ENCODE measurements at regions of chr6 and their contacts with region 1.

Region 1: DNA sequence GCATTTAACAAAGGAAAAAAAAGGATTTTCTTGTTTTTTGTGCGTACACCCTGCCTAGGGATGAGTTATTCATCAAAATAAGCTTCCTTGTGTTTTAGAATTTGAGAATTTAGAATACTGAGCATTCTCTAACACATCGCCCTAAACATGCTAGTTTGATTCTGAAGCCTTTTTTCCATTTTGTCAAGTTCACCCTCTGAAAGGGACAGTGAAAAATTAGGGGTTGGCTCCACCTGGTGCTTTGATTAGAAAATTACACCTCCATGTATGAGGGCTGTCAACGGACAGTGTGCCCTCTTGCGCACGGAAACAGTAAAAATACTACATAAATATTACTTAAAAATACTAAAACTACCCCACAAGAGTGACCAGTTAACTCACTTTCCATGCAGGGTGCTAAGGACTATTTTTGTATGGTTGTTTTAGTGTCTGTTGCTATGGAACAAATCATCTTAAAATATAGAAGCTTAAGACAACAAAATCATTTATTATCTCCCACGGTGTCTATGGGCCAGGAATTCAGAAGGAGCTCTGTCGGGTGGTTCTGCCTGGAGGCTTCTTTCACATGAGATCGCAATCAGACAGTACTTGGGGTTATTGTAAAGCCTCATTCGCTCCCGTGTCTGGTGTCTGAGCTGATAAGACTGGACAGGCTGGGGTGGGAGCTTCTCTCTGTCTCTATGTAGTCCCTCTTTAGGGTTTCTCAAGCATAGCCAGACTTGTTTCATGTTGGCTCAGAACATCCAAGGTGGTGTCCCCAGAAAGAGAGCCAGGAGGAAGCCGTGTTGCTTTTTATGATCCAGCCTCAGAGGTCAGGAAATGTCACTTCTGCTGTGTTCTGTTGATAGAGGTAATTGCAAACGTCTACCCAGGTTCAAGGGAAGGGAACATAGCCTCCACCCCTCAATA is 41.1 kb upstream of the TMEM170B start:
- DNase-seq: peak; percentile 91
- ATAC-seq: peak; percentile 91
- H3K4me3 ChIP-seq: no peak overlapping the region
- H3K27ac ChIP-seq: peak overlapping the region; percentile 10
- H3K4me1 ChIP-seq: peaks cover 72% of the 10 kb centered on the region
- H3K27me3 ChIP-seq: no peaks in the 10 kb centered on the region
- CTCF ChIP-seq: peak; percentile 95
- EP300 ChIP-seq: peak in 1 of 2 experiments; percentile 34; a peak in 1 of 4 replicates
- POLR2A ChIP-seq: no peak
- RAD21 ChIP-seq: peak; percentile 98

Region 2: DNA sequence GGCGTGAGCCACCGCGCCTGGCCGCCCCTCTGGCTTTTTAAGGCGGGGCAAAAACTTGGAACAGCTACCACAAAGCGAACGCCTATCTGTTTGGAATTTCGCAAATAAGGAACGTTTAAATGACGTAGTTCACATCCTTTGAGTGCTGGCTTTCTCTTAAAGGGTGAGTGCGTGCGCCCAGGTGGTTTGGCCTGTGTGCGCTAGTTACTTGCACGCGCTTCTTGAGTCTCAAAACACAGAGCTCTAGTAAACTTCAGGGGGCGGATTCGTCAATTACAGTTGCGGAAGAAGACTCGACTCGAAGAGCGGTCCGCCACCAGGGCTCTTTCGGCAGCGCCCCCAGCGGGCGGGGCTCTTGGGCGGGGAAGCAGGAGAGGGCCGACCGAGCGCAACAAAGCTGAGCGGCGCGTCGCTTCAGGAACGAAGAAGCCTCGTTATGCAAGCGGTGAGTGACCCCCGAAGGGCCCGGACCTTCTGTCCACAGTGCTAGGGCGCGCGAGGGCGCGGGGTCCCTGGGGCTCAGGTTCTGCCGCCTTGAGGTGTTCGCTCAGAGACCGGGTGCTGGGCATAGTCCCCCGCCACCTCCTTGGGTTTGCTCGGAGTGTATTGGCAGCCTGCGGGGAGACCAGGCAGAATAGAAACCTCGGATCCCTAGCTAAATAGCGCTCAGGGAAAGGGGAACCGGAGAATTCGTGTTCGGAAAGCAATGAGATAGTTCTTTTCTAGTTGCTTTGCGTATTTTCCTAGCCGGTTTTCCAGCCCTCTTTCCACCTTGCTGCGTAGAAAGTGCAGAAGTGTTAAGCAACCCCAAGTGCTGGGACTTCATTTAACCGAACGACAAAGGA is 609.5 kb before region 1 on chr6 and contains the start of gene SYCP2L:
- CTCF ChIA-PET with region 1: no interaction called
- POLR2A ChIA-PET with region 1: no interaction called
- in situ Hi-C with region 1: no loop called
- intact Hi-C with region 1: no loop called
- DNase-seq: no peak
- ATAC-seq: no peak
- H3K4me3 ChIP-seq: no peak within 1 kb of the TSS
- H3K27ac ChIP-seq: no peak within 1 kb of the TSS
- H3K4me1 ChIP-seq: 0 out of 2 replicates have a peak, but pooled peaks cover 2% of the 10 kb centered on the region
- H3K27me3 ChIP-seq: peaks cover 0 to 22% of the 10 kb centered on the region in 2 experiments; a peak in 4 of 5 replicates
- CTCF ChIP-seq: no peak
- EP300 ChIP-seq: no peak
- POLR2A ChIP-seq: no peak
- RAD21 ChIP-seq: no peak
- total RNA-seq, gene SYCP2L: 0.22 TPM in 1 of 2 replicates, not detected in the other

Region 3: DNA sequence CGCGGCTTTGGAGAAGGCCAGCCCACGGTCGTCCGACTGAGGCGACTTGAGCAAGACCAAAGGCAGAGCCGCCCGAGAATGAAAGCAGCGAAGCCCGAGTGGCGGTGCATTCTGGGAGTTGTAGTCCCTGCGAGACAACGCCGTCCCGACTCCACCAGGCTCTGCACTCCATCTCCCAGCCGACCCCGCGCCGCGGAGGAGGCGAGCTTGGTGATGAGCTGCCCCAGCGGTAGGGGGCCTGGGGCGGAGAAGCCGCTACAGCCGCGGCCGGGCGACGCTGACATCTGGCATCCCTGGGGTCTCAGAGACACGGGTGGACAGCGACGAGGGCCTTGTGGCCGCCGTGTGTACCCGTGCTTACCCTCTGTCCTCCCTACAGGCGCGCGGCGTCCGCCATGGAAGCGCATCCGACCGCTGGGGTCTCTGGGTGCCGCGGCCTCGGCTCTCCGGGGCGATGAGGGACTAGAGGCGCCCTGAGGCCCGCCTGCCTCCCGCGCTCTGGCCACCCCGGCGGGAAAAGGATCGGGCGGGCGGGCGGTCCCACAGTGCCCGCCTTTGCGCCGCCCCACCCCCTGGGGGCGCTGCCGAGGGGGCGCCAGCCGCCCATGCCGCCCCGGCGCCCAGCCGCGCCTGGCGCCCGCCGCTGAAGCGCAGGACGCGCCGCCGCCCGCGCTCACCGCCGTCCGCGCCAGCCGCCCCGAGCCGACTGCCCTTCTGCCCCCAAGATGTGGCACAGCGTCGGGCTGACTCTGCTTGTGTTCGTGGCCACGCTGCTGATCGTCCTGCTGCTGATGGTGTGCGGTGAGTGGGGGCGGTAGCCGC is 402.6 kb before region 1 on chr6 and contains the start of gene SMIM13:
- CTCF ChIA-PET with region 1: interaction called, 4 read pairs
- POLR2A ChIA-PET with region 1: no interaction called
- in situ Hi-C with region 1: no loop called
- intact Hi-C with region 1: loop called (anchors 1 kb)
- DNase-seq: peak; percentile 98
- ATAC-seq: peak; percentile 97
- H3K4me3 ChIP-seq: peak within 1 kb of the TSS; percentile 93 to 99 (median 97)
- H3K27ac ChIP-seq: peak within 1 kb of the TSS; percentile 90
- H3K4me1 ChIP-seq: peaks cover 44% of the 10 kb centered on the region
- H3K27me3 ChIP-seq: no peaks in the 10 kb centered on the region; a peak in 1 of 5 replicates
- CTCF ChIP-seq: peak; percentile 67
- EP300 ChIP-seq: peak in 1 of 2 experiments; percentile 20; a peak in 2 of 4 replicates
- POLR2A ChIP-seq: peak; percentile 89 to 92
- RAD21 ChIP-seq: peak; percentile 79
- total RNA-seq, gene SMIM13: 9.5 and 10.2 TPM in 2 replicates

Region 4: GRCh38 chr6:11172501-11173332 is 323.7 kb before region 1 on chr6:
- CTCF ChIA-PET with region 1: interaction called, 65 read pairs
- POLR2A ChIA-PET with region 1: no interaction called
- in situ Hi-C with region 1: loop called (anchors 5 kb)
- intact Hi-C with region 1: loop called (anchors 1 kb)
- DNase-seq: peak; percentile 66
- ATAC-seq: peak; percentile 86
- H3K4me3 ChIP-seq: peak overlapping the region in 1 of 3 experiments; percentile 47; a peak in 2 of 6 replicates
- H3K27ac ChIP-seq: no peak overlapping the region
- H3K4me1 ChIP-seq: peaks cover 36% of the 10 kb centered on the region
- H3K27me3 ChIP-seq: no peaks in the 10 kb centered on the region
- CTCF ChIP-seq: peak; percentile 96
- EP300 ChIP-seq: no peak
- POLR2A ChIP-seq: no peak
- RAD21 ChIP-seq: peak; percentile 83

Region 5: DNA sequence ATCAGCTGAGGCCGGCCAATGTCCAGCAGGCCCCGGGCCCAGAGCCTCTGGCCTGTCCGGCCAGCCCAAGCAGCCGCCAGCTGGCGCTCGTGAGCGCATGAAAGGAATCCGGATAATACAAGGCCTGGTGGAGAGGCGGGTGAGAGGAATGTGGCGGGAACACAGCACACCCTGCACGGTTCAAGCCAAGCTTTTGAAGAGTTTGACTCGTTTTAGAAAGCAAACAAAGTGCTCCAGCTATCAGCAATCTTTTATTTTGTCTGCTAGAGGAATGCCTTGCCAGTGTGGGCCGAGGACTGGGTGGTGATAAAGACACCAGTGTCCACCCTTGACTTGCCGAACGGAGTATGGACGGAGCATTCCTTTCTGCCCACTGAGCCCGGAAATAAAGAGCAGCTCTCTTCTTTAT is 254.6 kb before region 1 on chr6:
- CTCF ChIA-PET with region 1: interaction called, 34 read pairs
- POLR2A ChIA-PET with region 1: no interaction called
- in situ Hi-C with region 1: no loop called
- intact Hi-C with region 1: loop called (anchors 1 kb)
- DNase-seq: peak; percentile 86
- ATAC-seq: peak; percentile 99
- H3K4me3 ChIP-seq: no peak overlapping the region
- H3K27ac ChIP-seq: no peak overlapping the region
- H3K4me1 ChIP-seq: peaks cover 32% of the 10 kb centered on the region
- H3K27me3 ChIP-seq: no peaks in the 10 kb centered on the region
- CTCF ChIP-seq: peak; percentile 87
- EP300 ChIP-seq: peak in 1 of 2 experiments; percentile 55; a peak in 1 of 4 replicates
- POLR2A ChIP-seq: no peak
- RAD21 ChIP-seq: peak; percentile 98

Region 6: DNA sequence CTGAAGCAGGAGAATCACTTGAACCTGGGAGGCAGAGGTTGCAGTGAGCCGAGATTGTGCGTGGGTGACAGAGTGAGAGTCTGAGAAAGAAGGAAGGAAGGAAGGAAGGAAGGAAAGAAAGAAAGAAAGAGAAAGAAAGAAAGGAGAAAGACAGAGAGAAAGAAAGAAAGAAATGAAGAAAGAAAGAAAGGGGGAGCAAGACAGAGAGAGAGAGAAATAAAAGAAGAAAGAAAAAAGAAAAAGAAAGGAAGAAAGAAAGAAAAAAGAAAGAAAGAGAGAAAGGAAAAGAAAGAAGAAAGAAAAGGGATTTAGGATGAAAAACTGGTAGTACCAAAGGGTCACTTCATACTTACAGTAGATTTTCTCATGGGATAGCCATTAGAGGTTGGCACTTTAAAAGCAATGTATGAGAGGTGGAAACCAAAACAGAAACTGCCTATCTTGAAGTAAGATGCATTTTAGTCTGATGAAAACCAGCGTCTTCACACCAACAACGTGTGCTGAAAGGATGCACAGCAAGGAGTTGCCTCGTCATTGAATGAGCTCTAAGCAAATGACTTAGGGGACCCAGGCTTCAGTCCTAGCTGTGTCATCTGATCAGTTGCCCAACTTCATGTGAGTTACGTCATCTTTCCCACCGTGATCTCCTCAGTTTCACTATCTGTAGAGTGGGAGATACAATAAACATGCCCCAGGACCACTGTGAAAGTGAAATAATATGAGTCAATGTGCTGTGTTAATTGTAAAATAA is 130.0 kb before region 1 on chr6:
- CTCF ChIA-PET with region 1: no interaction called
- POLR2A ChIA-PET with region 1: interaction called, 7 read pairs
- in situ Hi-C with region 1: loop called (anchors 10 kb)
- intact Hi-C with region 1: no loop called
- DNase-seq: no peak
- ATAC-seq: no peak
- H3K4me3 ChIP-seq: no peak overlapping the region
- H3K27ac ChIP-seq: peak overlapping the region; percentile 94
- H3K4me1 ChIP-seq: peaks cover 77% of the 10 kb centered on the region
- H3K27me3 ChIP-seq: no peaks in the 10 kb centered on the region
- CTCF ChIP-seq: no peak
- EP300 ChIP-seq: no peak; a peak in 1 of 4 replicates
- POLR2A ChIP-seq: no peak
- RAD21 ChIP-seq: no peak; the same call in 1 of the 2 replicates

Region 7: DNA sequence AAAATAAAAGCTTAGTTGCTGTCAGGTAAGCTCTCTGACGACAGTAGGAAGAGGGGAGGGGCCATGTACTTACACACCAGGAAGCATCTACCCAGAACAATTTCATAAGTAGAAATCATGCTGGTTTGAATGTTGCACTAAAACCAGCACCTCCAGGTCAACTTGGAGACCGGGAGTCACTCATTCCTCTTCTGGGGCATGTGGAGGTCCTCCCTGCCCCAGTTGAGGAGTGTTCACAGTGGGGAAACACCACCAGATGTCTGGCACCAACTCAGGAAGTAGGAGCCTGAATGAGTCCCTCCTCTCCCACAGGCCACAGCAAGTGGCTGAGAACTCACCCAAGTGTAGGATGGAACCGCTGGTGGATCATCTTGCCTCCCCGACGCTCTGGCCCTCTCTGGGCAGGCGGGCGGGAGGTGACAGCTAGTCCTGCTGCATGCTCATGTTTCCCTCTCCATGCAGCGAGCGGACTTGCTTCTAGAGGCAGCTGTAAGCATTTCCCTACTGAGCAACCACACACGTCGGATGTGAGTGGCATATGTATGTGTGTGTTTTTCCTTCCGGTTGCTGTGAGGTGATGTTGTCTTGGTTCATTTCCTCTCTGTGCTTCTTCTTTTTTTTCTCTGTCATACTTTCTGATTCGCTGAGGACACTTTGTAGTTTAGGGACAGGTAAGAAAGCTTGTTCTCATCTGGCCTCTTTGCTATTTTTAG is 114.4 kb before region 1 on chr6:
- CTCF ChIA-PET with region 1: no interaction called
- POLR2A ChIA-PET with region 1: no interaction called
- in situ Hi-C with region 1: no loop called
- intact Hi-C with region 1: no loop called
- DNase-seq: no peak
- ATAC-seq: no peak
- H3K4me3 ChIP-seq: no peak overlapping the region
- H3K27ac ChIP-seq: no peak overlapping the region
- H3K4me1 ChIP-seq: peaks cover 20% of the 10 kb centered on the region
- H3K27me3 ChIP-seq: no peaks in the 10 kb centered on the region
- CTCF ChIP-seq: no peak
- EP300 ChIP-seq: no peak
- POLR2A ChIP-seq: no peak
- RAD21 ChIP-seq: no peak

Region 8: DNA sequence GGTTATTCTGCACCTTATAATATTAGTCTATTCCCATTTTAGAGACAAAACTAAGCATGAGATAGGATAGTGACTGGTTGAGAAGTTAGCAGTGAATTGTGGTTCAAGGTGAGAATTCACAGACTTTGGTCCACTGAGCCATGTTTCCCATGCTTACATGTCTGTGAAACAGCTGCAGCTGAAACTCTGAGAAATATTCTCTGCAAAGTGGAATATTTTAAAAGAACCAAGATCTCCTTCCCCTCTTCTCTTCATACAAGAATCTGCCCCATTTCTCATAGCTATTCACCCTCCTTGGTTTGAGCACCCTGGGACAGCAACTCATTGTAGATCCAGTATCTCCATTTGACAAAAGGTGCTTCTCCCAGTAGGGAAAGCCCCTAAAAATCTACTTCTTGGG is 29.0 kb before region 1 on chr6:
- CTCF ChIA-PET with region 1: no interaction called
- POLR2A ChIA-PET with region 1: no interaction called
- in situ Hi-C with region 1: no loop called
- intact Hi-C with region 1: no loop called
- DNase-seq: no peak
- ATAC-seq: no peak
- H3K4me3 ChIP-seq: no peak overlapping the region
- H3K27ac ChIP-seq: no peak overlapping the region
- H3K4me1 ChIP-seq: peaks cover 29% of the 10 kb centered on the region
- H3K27me3 ChIP-seq: no peaks in the 10 kb centered on the region
- CTCF ChIP-seq: no peak
- EP300 ChIP-seq: no peak
- POLR2A ChIP-seq: no peak
- RAD21 ChIP-seq: no peak

Region 9: DNA sequence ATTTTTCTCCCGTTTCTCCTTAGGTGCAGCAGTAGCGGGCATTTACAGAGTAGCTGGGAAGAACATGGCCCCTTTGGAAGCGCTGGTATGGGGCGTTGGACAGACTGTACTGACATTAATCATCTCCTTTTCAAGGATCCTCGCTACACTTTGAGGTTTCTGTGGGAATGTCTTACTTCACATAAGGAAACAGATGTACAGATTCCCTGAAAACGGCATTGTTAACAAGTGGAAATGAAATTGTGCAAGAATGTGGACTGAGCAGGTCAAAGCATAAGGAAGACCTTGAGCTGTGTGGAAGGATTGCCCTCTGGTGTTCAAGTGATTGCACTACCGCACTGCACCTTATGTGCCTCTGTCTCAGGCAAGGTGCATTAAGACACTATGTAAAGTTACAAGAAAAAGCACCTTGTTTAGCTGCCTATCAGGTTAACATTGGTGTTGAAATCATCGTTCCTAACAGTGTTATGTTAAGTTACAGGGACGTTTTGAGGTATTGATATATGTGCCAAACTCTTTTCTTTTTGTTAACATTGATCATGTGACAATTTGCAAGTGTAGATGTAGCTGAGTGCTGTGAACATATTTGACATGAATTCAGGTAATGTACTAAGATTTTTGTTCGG is 79.1 kb after region 1 on chr6:
- CTCF ChIA-PET with region 1: interaction called, 12 read pairs
- POLR2A ChIA-PET with region 1: no interaction called
- in situ Hi-C with region 1: no loop called
- intact Hi-C with region 1: loop called (anchors 1 kb)
- DNase-seq: peak; percentile 82
- ATAC-seq: peak; percentile 100
- H3K4me3 ChIP-seq: no peak overlapping the region
- H3K27ac ChIP-seq: no peak overlapping the region
- H3K4me1 ChIP-seq: peaks cover 6% of the 10 kb centered on the region
- H3K27me3 ChIP-seq: no peaks in the 10 kb centered on the region
- CTCF ChIP-seq: peak; percentile 99
- EP300 ChIP-seq: peak in 1 of 2 experiments; percentile 18; a peak in 1 of 4 replicates
- POLR2A ChIP-seq: no peak
- RAD21 ChIP-seq: peak; percentile 89